Ascending aorta (tissue), 2 donors: ENCODE measurements at regions of chr16 and their contacts with region 1.

Region 1: GRCh38 chr16:69396187-69397061 is 10.6 kb upstream of the TERF2 start:
- DNase-seq: peak in 1 of 2 donors; percentile 91
- H3K4me3 ChIP-seq: peak overlapping the region in 1 of 2 donors; percentile 31
- H3K27ac ChIP-seq: peak overlapping the region; percentile 45 to 68
- H3K4me1 ChIP-seq: peaks cover 0 to 10% of the 10 kb centered on the region in 2 donors
- H3K27me3 ChIP-seq: no peaks in the 10 kb centered on the region
- CTCF ChIP-seq: peak; percentile 65 to 79 (median 71)

Region 2: GRCh38 chr16:69351309-69352027 is 45.0 kb before region 1 on chr16 and contains the start of gene TMED6:
- intact Hi-C with region 1: no loop called
- DNase-seq: peak in 1 of 2 donors; percentile 47
- H3K4me3 ChIP-seq: no peak within 1 kb of the TSS
- H3K27ac ChIP-seq: no peak within 1 kb of the TSS
- H3K4me1 ChIP-seq: no peaks in the 10 kb centered on the region
- H3K27me3 ChIP-seq: no peaks in the 10 kb centered on the region
- CTCF ChIP-seq: no peak
- total RNA-seq, gene TMED6: not detected

Region 3: DNA sequence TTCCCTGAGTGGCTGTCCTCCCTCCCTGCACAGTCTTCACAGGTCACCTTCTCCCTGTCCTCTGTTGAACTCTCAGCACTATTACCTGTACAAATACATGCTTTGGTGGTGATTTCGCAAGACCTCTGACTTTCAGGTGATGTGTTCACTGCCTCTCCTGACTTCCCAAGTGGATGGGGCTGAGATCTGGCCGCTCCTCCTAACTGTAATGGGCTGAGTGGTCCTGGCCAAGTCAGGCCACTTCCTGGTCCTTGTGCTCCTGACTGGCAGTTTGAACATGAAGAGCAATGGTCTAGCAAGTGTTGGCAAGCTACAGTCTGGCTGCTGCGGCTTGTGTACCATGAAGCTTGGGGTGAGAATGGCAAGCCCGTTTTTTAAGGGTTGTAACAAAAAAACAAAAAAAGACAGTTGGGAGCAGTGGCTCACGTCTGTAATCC is 33.1 kb before region 1 on chr16:
- intact Hi-C with region 1: no loop called
- DNase-seq: no peak
- H3K4me3 ChIP-seq: no peak overlapping the region
- H3K27ac ChIP-seq: no peak overlapping the region
- H3K4me1 ChIP-seq: no peaks in the 10 kb centered on the region
- H3K27me3 ChIP-seq: no peaks in the 10 kb centered on the region
- CTCF ChIP-seq: no peak

Region 4: GRCh38 chr16:69424053-69424934 is 27.9 kb after region 1 on chr16 and contains the start of gene CYB5B:
- intact Hi-C with region 1: loop called (anchors 2 kb)
- DNase-seq: peak; percentile 89 to 97
- H3K4me3 ChIP-seq: peak within 1 kb of the TSS; percentile 80 to 93
- H3K27ac ChIP-seq: peak within 1 kb of the TSS; percentile 65 to 85
- H3K4me1 ChIP-seq: no peaks in the 10 kb centered on the region
- H3K27me3 ChIP-seq: no peaks in the 10 kb centered on the region
- CTCF ChIP-seq: no peak
- total RNA-seq, gene CYB5B: 19.2 TPM

Region 5: DNA sequence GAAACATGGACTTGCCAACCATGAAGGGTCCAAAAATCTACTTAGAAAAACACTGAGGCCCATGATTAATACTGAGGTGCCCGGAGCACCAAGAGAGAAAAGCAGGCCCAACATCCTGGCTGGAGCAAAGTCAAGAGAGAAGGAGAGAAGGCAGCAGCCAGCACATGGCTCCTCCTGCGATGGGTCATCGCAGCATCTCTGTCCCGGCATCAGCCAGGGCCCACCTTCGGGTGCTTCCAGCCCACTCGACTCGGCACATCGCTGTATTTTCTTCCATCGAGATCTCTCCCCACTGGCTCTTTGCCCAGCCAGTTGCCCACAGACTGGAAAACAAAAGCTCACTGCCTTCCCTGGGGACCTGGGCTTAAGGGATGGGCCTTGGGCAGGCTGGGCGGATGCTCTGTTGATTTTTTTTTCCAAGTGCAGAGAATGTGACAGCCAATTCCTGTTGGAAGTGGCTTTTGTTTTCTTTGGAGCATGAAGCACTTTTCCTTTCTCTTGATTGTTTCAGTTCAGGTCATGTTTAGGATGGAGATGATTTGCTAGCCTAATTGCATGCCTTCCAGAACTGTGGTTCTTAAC is 86.1 kb after region 1 on chr16:
- intact Hi-C with region 1: loop called (anchors 5 kb)
- DNase-seq: peak in 1 of 2 donors; percentile 79
- H3K4me3 ChIP-seq: peak overlapping the region in 1 of 2 donors; percentile 55
- H3K27ac ChIP-seq: peak overlapping the region; percentile 85 to 88
- H3K4me1 ChIP-seq: peaks cover 2 to 13% of the 10 kb centered on the region in 2 donors
- H3K27me3 ChIP-seq: no peaks in the 10 kb centered on the region
- CTCF ChIP-seq: no peak

Region 6: GRCh38 chr16:69644790-69645189 is 248.4 kb after region 1 on chr16:
- intact Hi-C with region 1: loop called (anchors 10 kb)
- DNase-seq: no peak
- H3K4me3 ChIP-seq: no peak overlapping the region
- H3K27ac ChIP-seq: no peak overlapping the region
- H3K4me1 ChIP-seq: peaks cover 0 to 2% of the 10 kb centered on the region in 2 donors
- H3K27me3 ChIP-seq: no peaks in the 10 kb centered on the region
- CTCF ChIP-seq: no peak

Region 7: GRCh38 chr16:69754469-69755310 is 358.3 kb after region 1 on chr16 and contains the start of gene NOB1:
- intact Hi-C with region 1: loop called (anchors 1 kb)
- DNase-seq: peak; percentile 81 to 97
- H3K4me3 ChIP-seq: peak within 1 kb of the TSS; percentile 65 to 68
- H3K27ac ChIP-seq: peak within 1 kb of the TSS; percentile 15 to 59
- H3K4me1 ChIP-seq: peaks cover 5 to 19% of the 10 kb centered on the region in 2 donors
- H3K27me3 ChIP-seq: no peaks in the 10 kb centered on the region
- CTCF ChIP-seq: peak; percentile 93 to 100 (median 97)
- total RNA-seq, gene NOB1: 20.2 TPM